B cell (primary cell): ENCODE measurements at regions of chr12 and their contacts with region 1.

Region 1: DNA sequence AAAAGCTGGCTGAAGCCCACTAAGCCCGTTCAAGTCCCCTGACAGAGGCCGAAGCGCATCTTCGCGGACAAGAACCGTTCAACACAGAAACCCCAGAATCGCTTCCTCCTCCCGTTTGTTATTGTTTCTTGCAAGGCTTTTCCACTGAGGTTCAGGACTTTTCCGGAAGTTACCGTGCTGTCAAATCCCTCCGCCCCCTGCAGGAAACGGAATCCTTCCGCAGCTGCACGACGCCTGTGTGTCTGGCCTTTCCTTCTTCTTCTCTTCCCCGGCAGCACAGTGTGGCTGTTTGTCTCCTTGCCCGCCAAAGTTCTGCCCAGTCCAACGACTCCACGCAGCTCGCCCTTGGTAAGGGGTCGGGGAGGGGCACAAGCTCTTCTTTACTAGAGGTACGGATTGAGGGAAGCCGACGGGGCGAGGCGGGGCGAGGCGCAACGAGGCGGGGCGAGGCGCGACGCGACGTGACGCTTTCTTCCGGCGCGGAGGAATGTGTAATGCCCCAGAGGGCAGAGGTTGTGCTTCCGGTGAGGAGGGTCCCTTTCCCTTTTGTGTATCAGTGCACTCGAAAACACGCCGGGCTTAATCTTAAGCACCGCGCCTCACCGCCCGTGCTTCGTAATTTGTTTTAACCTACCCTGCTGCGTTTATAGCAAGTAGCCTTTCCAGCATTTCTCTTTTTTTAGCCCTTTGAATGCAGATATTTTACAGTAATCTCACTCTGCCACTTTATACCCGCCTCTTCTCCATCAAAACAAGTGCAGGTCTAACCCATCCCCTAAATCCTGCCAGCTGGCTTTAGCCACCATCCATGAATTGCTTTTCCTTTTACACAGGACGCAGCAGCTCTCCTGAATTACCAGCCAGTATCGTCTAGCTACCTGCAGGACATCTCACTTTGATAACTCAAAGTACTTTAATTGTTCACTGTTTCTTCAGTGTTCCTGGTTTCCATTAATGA is at the start of gene KDM5A:
- DNase-seq: peak; percentile 98
- ATAC-seq: peak; percentile 93
- H3K4me3 ChIP-seq: peak within 1 kb of the TSS; percentile 81 to 99 (median 98)
- H3K4me3 Mint-ChIP-seq: peak within 1 kb of the TSS; percentile 98
- H3K27ac ChIP-seq: peak within 1 kb of the TSS; percentile 90 to 93
- H3K27ac Mint-ChIP-seq: peak within 1 kb of the TSS; percentile 99
- H3K4me1 ChIP-seq: peaks cover 27 to 28% of the 10 kb centered on the region in 2 donors
- H3K4me1 Mint-ChIP-seq: peaks cover 40% of the 10 kb centered on the region
- H3K27me3 ChIP-seq: no peaks in the 10 kb centered on the region
- H3K27me3 Mint-ChIP-seq: no peaks in the 10 kb centered on the region
- CTCF ChIP-seq: no peak
- total RNA-seq, gene KDM5A: 171 and 175 TPM in 2 replicates

Region 2: DNA sequence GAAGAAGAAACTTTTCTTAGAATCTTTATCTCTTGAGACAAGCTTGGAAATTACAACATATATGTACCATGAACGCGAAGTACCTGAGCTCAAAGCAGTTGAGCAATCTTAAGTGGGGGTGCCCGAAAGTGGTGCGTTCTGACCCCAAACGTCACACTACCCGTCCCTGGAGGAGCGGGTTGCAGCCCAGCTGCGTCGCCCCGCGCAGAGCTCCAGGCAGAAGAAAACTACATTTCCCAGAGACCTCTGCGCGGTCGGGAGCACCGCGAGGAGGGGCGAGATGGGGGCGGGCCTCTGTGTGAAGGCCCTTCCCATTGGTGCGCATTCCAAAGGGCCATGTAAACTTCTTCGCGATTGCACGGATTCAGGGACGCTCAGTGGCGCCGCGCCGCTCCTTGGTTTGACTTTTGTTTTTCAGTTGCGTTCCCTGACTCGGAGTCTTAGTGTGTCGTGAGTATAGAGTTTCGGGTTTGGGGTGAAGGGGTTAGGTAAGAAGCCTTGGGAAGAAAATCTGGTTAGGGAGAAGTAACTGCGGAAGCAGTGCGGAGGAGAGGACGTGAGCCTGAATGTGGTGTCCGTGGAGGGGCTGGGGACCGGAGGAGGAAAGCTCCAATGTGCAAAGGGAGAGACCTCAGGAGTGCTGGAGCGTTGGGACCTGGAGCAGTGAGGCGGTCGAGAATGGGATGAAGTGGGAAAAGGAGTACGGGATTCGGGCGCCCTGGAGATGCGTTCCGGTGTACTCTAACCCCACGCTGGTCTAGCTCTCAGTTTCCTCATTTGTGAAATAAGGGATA is 12.0 kb after region 1 on chr12 and contains the start of gene CCDC77:
- CTCF ChIA-PET with region 1: interaction called, 26 read pairs
- POLR2A ChIA-PET with region 1: interaction called, 35 read pairs
- intact Hi-C with region 1: loop called (anchors 1 kb)
- DNase-seq: peak; percentile 97
- ATAC-seq: peak; percentile 100
- H3K4me3 ChIP-seq: peak within 1 kb of the TSS; percentile 76 to 89 (median 82)
- H3K4me3 Mint-ChIP-seq: no peak within 1 kb of the TSS
- H3K27ac ChIP-seq: peak within 1 kb of the TSS; percentile 53 to 76
- H3K27ac Mint-ChIP-seq: no peak within 1 kb of the TSS
- H3K4me1 ChIP-seq: peaks cover 11 to 14% of the 10 kb centered on the region in 2 donors
- H3K4me1 Mint-ChIP-seq: no peaks in the 10 kb centered on the region
- H3K27me3 ChIP-seq: no peaks in the 10 kb centered on the region
- H3K27me3 Mint-ChIP-seq: no peaks in the 10 kb centered on the region
- CTCF ChIP-seq: peak; percentile 21
- total RNA-seq, gene CCDC77: 12.9 and 18.5 TPM in 2 replicates

Region 3: GRCh38 chr12:480831-481816 is 91.7 kb after region 1 on chr12:
- CTCF ChIA-PET with region 1: no interaction called
- POLR2A ChIA-PET with region 1: no interaction called
- intact Hi-C with region 1: no loop called
- DNase-seq: no peak
- ATAC-seq: no peak
- H3K4me3 ChIP-seq: no peak overlapping the region
- H3K4me3 Mint-ChIP-seq: no peak overlapping the region
- H3K27ac ChIP-seq: no peak overlapping the region
- H3K27ac Mint-ChIP-seq: no peak overlapping the region
- H3K4me1 ChIP-seq: no peaks in the 10 kb centered on the region
- H3K4me1 Mint-ChIP-seq: no peaks in the 10 kb centered on the region
- H3K27me3 ChIP-seq: peaks cover 0 to 12% (median 3%) of the 10 kb centered on the region in 4 experiments
- H3K27me3 Mint-ChIP-seq: peaks cover 43% of the 10 kb centered on the region
- CTCF ChIP-seq: no peak

Region 4: DNA sequence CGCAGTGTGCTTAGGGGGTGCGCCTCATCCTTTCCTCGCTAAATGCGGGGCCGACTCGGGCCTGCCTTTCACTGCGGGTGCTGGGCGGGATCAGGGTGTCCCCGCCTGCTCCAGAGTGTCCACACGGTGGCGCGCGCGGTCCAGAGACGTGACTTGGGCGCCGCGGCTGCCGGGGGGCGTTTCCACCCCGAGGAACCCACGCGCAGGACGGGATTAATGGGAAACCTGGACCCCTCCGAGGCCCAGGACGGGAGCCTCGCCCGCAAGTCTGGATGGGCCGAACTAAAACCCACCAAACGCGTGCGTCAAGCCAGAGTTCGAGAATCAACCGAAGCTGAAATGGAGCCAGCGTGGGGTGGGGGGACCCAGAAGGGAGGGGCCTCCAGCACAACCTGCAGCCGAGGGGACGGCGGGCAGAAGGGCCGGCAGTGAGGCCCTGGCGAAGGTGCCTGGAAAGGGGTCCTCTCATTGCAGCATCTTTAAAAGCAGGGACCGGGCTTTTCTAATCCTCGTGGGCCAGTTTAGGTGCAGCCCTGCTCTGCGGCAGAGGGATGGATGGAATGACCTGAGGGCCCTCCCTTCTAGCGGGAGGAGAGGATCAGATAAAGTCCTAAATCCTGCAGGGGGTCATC is 180.5 kb after region 1 on chr12:
- CTCF ChIA-PET with region 1: no interaction called
- POLR2A ChIA-PET with region 1: no interaction called
- intact Hi-C with region 1: no loop called
- DNase-seq: peak; percentile 87
- ATAC-seq: peak; percentile 97
- H3K4me3 ChIP-seq: peak overlapping the region; percentile 21 to 72 (median 53)
- H3K4me3 Mint-ChIP-seq: peak overlapping the region; percentile 91
- H3K27ac ChIP-seq: no peak overlapping the region
- H3K27ac Mint-ChIP-seq: peak overlapping the region; percentile 32
- H3K4me1 ChIP-seq: peaks cover 4 to 14% of the 10 kb centered on the region in 2 donors
- H3K4me1 Mint-ChIP-seq: peaks cover 4% of the 10 kb centered on the region
- H3K27me3 ChIP-seq: no peaks in the 10 kb centered on the region
- H3K27me3 Mint-ChIP-seq: no peaks in the 10 kb centered on the region
- CTCF ChIP-seq: peak; percentile 94

Region 5: GRCh38 chr12:1078002-1078401 is 688.6 kb after region 1 on chr12:
- CTCF ChIA-PET with region 1: no interaction called
- POLR2A ChIA-PET with region 1: interaction called, 11 read pairs
- intact Hi-C with region 1: no loop called
- DNase-seq: no peak
- ATAC-seq: no peak
- H3K4me3 ChIP-seq: no peak overlapping the region
- H3K4me3 Mint-ChIP-seq: no peak overlapping the region
- H3K27ac ChIP-seq: no peak overlapping the region
- H3K27ac Mint-ChIP-seq: no peak overlapping the region
- H3K4me1 ChIP-seq: no peaks in the 10 kb centered on the region
- H3K4me1 Mint-ChIP-seq: peaks cover 6% of the 10 kb centered on the region
- H3K27me3 ChIP-seq: no peaks in the 10 kb centered on the region
- H3K27me3 Mint-ChIP-seq: no peaks in the 10 kb centered on the region
- CTCF ChIP-seq: no peak

Region 6: GRCh38 chr12:1605129-1606020 is 1216.0 kb after region 1 on chr12:
- CTCF ChIA-PET with region 1: no interaction called
- POLR2A ChIA-PET with region 1: interaction called, 12 read pairs
- intact Hi-C with region 1: no loop called
- DNase-seq: peak; percentile 83
- ATAC-seq: peak; percentile 61
- H3K4me3 ChIP-seq: peak overlapping the region; percentile 37 to 63 (median 44)
- H3K4me3 Mint-ChIP-seq: peak overlapping the region; percentile 97
- H3K27ac ChIP-seq: no peak overlapping the region
- H3K27ac Mint-ChIP-seq: peak overlapping the region; percentile 66
- H3K4me1 ChIP-seq: peaks cover 11 to 27% of the 10 kb centered on the region in 2 donors
- H3K4me1 Mint-ChIP-seq: peaks cover 29% of the 10 kb centered on the region
- H3K27me3 ChIP-seq: no peaks in the 10 kb centered on the region
- H3K27me3 Mint-ChIP-seq: peaks cover 3% of the 10 kb centered on the region
- CTCF ChIP-seq: peak; percentile 72

Region 7: DNA sequence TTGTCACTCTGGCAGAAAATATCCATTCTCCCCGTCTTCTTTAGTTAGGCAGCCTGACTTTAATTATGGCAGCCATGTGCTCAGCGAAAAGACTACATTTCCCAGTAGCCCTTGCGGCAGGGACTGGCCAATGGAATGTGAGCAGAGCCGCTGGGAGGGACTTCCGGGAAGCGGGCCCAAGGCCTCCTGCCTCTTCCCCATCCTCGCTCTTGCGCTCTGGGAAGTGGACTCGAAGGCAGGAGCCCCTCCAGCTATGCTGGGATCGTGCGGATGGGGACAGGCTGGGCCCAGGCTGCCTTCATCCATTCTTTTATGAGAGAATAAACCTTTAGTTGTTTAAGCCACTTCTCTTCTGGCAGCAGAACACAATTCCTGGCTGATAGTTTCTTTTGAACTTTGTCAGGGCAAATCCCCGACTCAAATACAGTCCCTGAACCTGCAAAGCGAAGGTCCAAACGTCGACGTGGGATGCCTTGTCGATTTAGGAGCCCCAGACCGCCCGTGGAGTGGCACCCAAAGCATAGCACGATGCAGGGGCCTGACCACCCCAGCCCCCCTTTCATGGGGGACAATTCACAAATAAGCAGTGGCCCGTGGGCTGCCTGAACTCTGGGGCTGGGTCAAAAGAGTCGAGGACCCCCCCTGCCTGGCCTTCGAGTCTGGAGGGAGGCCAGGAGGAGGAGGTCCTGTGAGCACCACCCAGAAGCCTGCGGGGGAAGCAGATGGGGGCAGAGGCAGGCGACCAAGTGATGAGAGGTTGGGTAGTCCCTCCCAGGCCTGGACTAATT is 1415.3 kb after region 1 on chr12:
- CTCF ChIA-PET with region 1: no interaction called
- POLR2A ChIA-PET with region 1: no interaction called
- intact Hi-C with region 1: loop called (anchors 10 kb)
- DNase-seq: peak; percentile 89
- ATAC-seq: peak; percentile 78
- H3K4me3 ChIP-seq: peak overlapping the region in 1 of 5 experiments; percentile 21
- H3K4me3 Mint-ChIP-seq: peak overlapping the region; percentile 54
- H3K27ac ChIP-seq: peak overlapping the region in 1 of 2 donors; percentile 33
- H3K27ac Mint-ChIP-seq: peak overlapping the region; percentile 69
- H3K4me1 ChIP-seq: peaks cover 5 to 23% of the 10 kb centered on the region in 2 donors
- H3K4me1 Mint-ChIP-seq: peaks cover 25% of the 10 kb centered on the region
- H3K27me3 ChIP-seq: no peaks in the 10 kb centered on the region
- H3K27me3 Mint-ChIP-seq: no peaks in the 10 kb centered on the region
- CTCF ChIP-seq: no peak